Uterus (tissue), 4 donors: ENCODE measurements at regions of chr18 and their contacts with region 1.

Region 1: DNA sequence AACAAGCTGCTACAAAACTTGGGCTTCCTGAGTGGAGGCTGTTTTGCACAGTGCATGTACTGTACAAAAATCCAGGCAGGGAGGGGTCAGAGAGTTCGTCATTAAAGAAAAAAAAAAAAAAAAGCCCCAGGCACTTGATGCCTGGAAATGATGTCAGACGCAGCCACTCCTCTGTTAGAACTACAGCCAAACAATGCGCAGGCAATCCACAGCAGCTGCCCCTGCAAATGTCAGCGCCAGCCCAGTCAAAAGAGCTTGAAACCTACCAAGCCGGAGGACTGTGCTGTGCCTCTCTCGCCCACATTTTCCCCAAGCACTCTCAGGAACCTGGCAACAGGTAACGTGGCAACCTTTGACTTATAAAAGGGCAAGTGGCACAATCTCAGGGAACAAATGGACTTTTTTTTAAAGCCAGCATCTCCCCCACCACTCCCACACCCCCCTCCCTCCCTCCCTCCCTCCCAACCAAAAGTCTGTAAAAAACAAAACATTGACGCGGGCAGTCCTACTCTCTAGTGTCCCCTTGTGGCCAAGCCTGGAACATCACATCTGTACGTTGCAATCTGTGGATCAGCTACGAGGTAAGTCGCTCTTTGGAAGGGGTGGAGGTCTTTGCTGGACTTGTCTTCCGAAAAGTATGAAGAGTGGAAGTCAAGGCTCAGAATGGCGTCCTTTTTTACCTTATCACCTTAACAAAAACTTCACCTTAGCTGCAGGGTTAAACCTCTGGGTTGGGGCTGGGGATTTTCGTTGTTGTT is 144.1 kb downstream of the TGIF1 start:
- DNase-seq: peak; percentile 88 to 93
- H3K4me3 ChIP-seq: peak overlapping the region; percentile 30 to 48
- H3K27ac ChIP-seq: peak overlapping the region; percentile 95 to 98
- H3K4me1 ChIP-seq: peaks cover 9 to 23% of the 10 kb centered on the region in 2 donors
- H3K27me3 ChIP-seq: no peaks in the 10 kb centered on the region
- CTCF ChIP-seq: peak; percentile 86 to 97 (median 92)
- POLR2A ChIP-seq: peak; percentile 28 to 53

Region 2: GRCh38 chr18:3451183-3451988 is 142.7 kb before region 1 on chr18:
- intact Hi-C with region 1: loop called (anchors 10 kb)
- DNase-seq: peak; percentile 94 to 95
- H3K4me3 ChIP-seq: peak overlapping the region; percentile 60 to 63
- H3K27ac ChIP-seq: peak overlapping the region; percentile 98
- H3K4me1 ChIP-seq: peaks cover 10 to 13% of the 10 kb centered on the region in 2 donors
- H3K27me3 ChIP-seq: no peaks in the 10 kb centered on the region
- CTCF ChIP-seq: peak in 3 of 4 experiments; percentile 5 to 9 (median 7)
- POLR2A ChIP-seq: peak; percentile 82 to 92

Region 3: DNA sequence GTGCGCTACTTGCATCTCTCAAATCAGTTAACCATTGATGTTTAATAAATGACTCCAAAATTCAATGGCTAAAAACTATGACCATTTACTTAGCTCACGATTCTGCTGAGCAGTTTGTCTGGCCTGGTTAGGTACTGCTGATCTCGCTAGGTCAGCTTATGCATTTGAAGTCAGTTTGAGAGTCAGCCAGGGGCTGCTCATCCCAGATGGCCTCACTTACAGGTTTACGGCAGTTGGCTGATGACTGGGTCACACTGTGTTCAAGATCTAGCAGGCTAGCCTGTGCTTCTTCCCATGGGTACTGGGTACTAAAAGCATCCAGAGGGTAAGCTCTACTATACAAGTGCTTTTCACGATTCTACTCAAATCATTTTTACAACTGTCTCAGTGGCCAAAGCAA is 739.0 kb after region 1 on chr18:
- intact Hi-C with region 1: no loop called
- DNase-seq: no peak
- H3K4me3 ChIP-seq: no peak overlapping the region
- H3K27ac ChIP-seq: no peak overlapping the region
- H3K4me1 ChIP-seq: no peaks in the 10 kb centered on the region
- H3K27me3 ChIP-seq: no peaks in the 10 kb centered on the region
- CTCF ChIP-seq: no peak
- POLR2A ChIP-seq: no peak